Activated B cell treated with CpG ODN at 0.5 μM for 24 hours (primary cell): ENCODE measurements at regions of chr12 and their contacts with region 1.

Region 1: GRCh38 chr12:88111074-88111652 is 30.7 kb downstream of the CEP290 start:
- DNase-seq: no peak
- ATAC-seq: no peak
- H3K4me3 Mint-ChIP-seq: no peak overlapping the region
- H3K27ac Mint-ChIP-seq: no peak overlapping the region
- H3K4me1 Mint-ChIP-seq: no peaks in the 10 kb centered on the region
- H3K27me3 Mint-ChIP-seq: no peaks in the 10 kb centered on the region
- CTCF ChIP-seq: no peak

Region 2: DNA sequence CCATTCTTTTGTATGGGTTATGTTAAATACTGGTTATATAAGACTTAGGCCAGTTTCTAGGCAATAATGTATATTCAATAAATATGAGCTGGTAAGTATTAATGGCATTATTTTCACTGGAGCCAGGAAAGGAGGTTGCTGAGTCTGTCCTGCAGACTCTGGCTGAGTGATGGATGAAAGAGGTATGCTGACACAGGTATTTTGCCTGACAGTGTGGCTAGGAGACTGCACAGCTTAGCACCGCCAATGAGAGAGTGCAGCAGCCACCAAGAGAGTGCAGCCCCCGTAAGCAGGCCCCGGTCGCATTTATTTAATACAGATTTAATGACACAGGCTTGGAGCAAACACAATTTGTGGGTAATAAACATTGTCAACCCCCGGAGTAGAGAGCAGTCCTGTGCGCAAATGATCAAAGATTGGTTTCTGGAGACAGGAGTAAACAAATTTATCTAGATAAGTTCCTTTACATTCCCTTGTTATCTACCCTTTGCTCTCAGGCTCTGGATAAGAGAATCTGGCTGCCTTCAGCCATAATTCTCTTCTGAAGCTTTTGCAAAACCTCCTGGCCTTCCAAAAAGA is 68.4 kb after region 1 on chr12:
- CTCF ChIA-PET with region 1: no interaction called
- POLR2A ChIA-PET with region 1: no interaction called
- intact Hi-C with region 1: loop called (anchors 5 kb)
- DNase-seq: no peak
- ATAC-seq: no peak
- H3K4me3 Mint-ChIP-seq: no peak overlapping the region
- H3K27ac Mint-ChIP-seq: no peak overlapping the region
- H3K4me1 Mint-ChIP-seq: no peaks in the 10 kb centered on the region
- H3K27me3 Mint-ChIP-seq: no peaks in the 10 kb centered on the region
- CTCF ChIP-seq: no peak

Region 3: DNA sequence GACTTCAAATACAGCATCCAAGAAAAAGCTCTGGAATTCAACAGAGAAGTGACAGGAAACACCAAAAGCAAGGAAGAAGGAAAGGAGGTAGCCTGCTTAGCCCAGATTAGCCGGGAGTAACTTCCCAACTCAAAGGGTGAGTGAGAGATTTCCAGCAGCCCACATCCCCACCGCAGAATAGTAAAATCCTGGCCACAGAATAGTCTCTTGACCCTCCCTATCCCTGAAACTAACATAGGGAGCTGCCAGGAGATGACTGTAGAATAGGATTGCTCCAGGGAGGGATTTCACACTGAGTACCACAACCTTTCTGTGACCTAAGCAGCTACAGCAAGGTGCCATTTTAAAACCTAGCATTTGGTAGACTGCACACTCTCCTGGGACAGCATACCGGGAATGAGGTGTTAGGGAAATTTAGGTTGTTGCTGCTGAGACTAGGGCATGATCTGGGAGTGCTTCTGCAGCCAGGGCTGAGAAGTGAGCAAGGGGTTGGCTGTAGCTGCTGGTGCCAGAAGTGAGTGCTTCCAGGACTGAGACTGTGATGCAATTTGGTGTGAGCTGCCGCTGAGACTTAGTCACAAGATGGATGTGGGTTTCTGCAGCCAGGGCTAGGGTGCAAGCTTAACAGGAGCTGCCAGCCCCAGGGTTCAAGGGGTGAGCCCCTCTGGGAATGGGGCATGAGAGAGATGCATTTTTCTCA is 96.9 kb after region 1 on chr12:
- CTCF ChIA-PET with region 1: no interaction called
- POLR2A ChIA-PET with region 1: no interaction called
- intact Hi-C with region 1: no loop called
- DNase-seq: no peak
- ATAC-seq: no peak
- H3K4me3 Mint-ChIP-seq: no peak overlapping the region
- H3K27ac Mint-ChIP-seq: no peak overlapping the region
- H3K4me1 Mint-ChIP-seq: no peaks in the 10 kb centered on the region
- H3K27me3 Mint-ChIP-seq: no peaks in the 10 kb centered on the region
- CTCF ChIP-seq: no peak

Region 4: DNA sequence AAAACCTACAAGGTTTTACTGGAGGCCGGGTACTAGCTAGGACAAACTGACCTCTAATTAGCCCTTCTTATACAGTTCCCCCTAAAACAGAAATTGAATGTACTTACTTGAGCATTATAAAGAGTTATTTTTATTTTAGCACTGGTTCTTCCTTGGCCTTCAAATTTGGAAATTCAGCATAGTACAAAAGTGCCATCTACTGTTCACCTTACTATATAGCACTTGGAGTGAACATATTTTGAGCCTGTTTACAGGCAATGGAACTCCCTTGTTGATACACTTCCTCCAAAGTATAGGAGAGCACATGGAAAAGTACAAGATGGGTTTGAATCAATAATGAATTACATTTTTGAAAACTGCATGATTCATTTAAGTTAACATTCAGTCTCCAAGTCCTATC is 1418.6 kb after region 1 on chr12:
- CTCF ChIA-PET with region 1: no interaction called
- POLR2A ChIA-PET with region 1: no interaction called
- intact Hi-C with region 1: loop called (anchors 1 kb)
- DNase-seq: no peak
- ATAC-seq: peak; percentile 18
- H3K4me3 Mint-ChIP-seq: no peak overlapping the region
- H3K27ac Mint-ChIP-seq: peak overlapping the region; percentile 9
- H3K4me1 Mint-ChIP-seq: peaks cover 21% of the 10 kb centered on the region
- H3K27me3 Mint-ChIP-seq: no peaks in the 10 kb centered on the region
- CTCF ChIP-seq: peak; percentile 15